IMR-90 (cell line): ENCODE measurements at regions of chr10 and their contacts with region 1.

Region 1: GRCh38 chr10:77350711-77351119 is 286.9 kb downstream of the KCNMA1 start:
- DNase-seq: peak; percentile 100
- ATAC-seq: peak; percentile 94
- H3K4me3 ChIP-seq: no peak overlapping the region
- H3K27ac ChIP-seq: no peak overlapping the region
- H3K4me1 ChIP-seq: peaks cover 16% of the 10 kb centered on the region
- H3K27me3 ChIP-seq: no peaks in the 10 kb centered on the region
- CTCF ChIP-seq: 0 out of 2 replicates have a peak, but pooled peaks have one; percentile 31
- POLR2A ChIP-seq: 0 out of 2 replicates have a peak, but pooled peaks have one; percentile 26
- RAD21 ChIP-seq: peak; percentile 36

Region 2: GRCh38 chr10:77524281-77524711 is 173.6 kb after region 1 on chr10:
- CTCF ChIA-PET with region 1: no interaction called
- POLR2A ChIA-PET with region 1: no interaction called
- dilution Hi-C with region 1: no loop called
- in situ Hi-C with region 1: no loop called
- intact Hi-C with region 1: loop called (anchors 5 kb)
- DNase-seq: peak; percentile 87
- ATAC-seq: peak; percentile 89
- H3K4me3 ChIP-seq: no peak overlapping the region
- H3K27ac ChIP-seq: peak overlapping the region; percentile 52; the same call in 1 of the 2 replicates
- H3K4me1 ChIP-seq: peaks cover 22% of the 10 kb centered on the region
- H3K27me3 ChIP-seq: no peaks in the 10 kb centered on the region
- CTCF ChIP-seq: no peak
- POLR2A ChIP-seq: no peak
- RAD21 ChIP-seq: no peak; the same call in 1 of the 2 replicates